Naive thymus-derived CD4-positive, alpha-beta T cell (primary cell): ENCODE measurements at regions of chr13 and their contacts with region 1.

Region 1: DNA sequence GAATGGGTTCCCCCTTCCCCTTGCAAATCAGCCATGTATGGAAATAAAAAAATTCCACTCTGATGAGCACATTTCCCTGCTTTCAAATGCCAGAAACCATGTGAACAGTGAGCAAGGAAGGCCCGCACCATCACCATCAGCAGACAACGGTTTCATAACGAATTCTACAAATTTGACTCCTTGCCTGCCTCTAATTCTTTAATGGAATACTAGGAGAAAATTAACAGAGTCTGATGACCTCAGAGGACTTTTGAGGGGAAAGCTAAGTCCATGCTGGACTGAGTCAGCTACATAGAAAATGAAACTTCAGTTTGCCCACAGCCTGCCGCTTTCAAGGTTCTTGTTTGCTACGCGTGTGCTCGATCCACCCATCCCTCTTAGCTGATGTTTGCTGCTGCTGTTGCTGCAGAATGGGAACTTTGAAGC is 46.7 kb upstream of the KL start:
- DNase-seq: no peak
- ATAC-seq: no peak
- H3K4me3 ChIP-seq: no peak overlapping the region
- H3K4me3 Mint-ChIP-seq: no peak overlapping the region
- H3K27ac ChIP-seq: no peak overlapping the region
- H3K27ac Mint-ChIP-seq: no peak overlapping the region
- H3K4me1 ChIP-seq: no peaks in the 10 kb centered on the region
- H3K4me1 Mint-ChIP-seq: peaks cover 0 to 7% (median 0%) of the 10 kb centered on the region in 7 donors
- H3K27me3 ChIP-seq: no peaks in the 10 kb centered on the region
- H3K27me3 Mint-ChIP-seq: peaks cover 0 to 7% (median 0%) of the 10 kb centered on the region in 5 donors

Region 2: DNA sequence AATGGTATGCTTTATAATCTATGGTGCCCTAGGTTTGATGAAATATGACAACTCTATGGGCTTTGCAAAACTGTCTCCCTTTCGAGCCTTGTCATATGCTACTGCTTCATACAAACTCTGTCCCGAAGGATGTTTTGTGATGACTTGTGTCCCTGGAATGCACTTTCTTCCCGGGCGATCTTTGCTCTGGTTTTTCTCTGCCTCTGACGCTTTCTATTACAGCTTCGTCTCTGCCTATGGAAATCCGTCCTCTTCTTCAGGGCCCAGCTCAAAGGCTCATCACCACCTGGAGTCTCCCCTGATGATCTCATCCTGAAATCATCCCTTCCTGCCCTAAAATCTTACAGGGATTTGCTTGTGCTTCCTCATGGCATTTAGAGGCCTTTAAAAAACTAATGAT is 144.9 kb before region 1 on chr13:
- CTCF ChIA-PET with region 1: no interaction called
- POLR2A ChIA-PET with region 1: no interaction called
- intact Hi-C with region 1: no loop called
- DNase-seq: no peak
- ATAC-seq: no peak
- H3K4me3 ChIP-seq: no peak overlapping the region
- H3K4me3 Mint-ChIP-seq: no peak overlapping the region
- H3K27ac ChIP-seq: no peak overlapping the region
- H3K27ac Mint-ChIP-seq: no peak overlapping the region
- H3K4me1 ChIP-seq: no peaks in the 10 kb centered on the region
- H3K4me1 Mint-ChIP-seq: peaks cover 0 to 6% (median 0%) of the 10 kb centered on the region in 7 donors
- H3K27me3 ChIP-seq: no peaks in the 10 kb centered on the region
- H3K27me3 Mint-ChIP-seq: peaks cover 0 to 2% (median 0%) of the 10 kb centered on the region in 5 donors

Region 3: DNA sequence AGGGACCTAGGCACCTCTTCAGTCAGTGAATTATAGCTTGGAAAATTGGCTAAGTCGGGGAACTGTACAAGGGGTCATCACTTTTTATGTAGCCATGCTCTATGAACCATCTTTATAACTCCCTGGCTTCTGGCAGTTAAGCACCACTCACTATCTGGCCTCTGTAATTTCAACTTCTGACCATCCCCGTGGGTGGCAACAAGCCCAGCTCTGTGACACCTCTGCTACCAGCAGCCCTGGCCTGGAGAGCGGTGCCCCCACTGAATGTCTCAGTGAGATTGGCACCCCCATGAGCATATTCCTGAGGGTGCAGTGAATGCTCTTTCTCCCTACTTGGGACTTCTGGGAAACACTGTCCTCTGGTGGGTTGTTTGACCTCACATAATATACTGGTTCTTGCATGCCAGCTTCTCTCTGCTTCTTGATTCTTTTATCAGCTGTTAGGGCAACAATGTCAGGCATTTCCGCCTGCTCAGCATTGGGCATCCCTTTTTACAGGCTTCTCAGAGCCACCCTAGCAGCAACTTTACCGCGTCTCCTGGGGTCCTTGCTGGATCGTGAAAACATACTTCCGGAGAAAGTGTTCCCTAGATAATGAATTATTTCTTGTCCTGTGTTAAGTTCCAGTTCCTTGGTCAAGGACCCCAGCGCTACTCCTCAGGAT is 57.1 kb after region 1 on chr13:
- CTCF ChIA-PET with region 1: no interaction called
- POLR2A ChIA-PET with region 1: no interaction called
- intact Hi-C with region 1: loop called in 1 of 2 experiments (anchors 10 kb)
- DNase-seq: no peak
- ATAC-seq: no peak
- H3K4me3 ChIP-seq: no peak overlapping the region
- H3K4me3 Mint-ChIP-seq: no peak overlapping the region
- H3K27ac ChIP-seq: no peak overlapping the region
- H3K27ac Mint-ChIP-seq: no peak overlapping the region
- H3K4me1 ChIP-seq: no peaks in the 10 kb centered on the region
- H3K4me1 Mint-ChIP-seq: no peaks in the 10 kb centered on the region
- H3K27me3 ChIP-seq: no peaks in the 10 kb centered on the region
- H3K27me3 Mint-ChIP-seq: peaks cover 22 to 42% (median 37%) of the 10 kb centered on the region in 5 donors

Region 4: GRCh38 chr13:33188093-33188882 is 218.8 kb after region 1 on chr13:
- CTCF ChIA-PET with region 1: no interaction called
- POLR2A ChIA-PET with region 1: no interaction called
- intact Hi-C with region 1: no loop called
- DNase-seq: no peak
- ATAC-seq: no peak
- H3K4me3 ChIP-seq: no peak overlapping the region
- H3K4me3 Mint-ChIP-seq: peak overlapping the region in 1 of 10 donors; percentile 18
- H3K27ac ChIP-seq: no peak overlapping the region
- H3K27ac Mint-ChIP-seq: peak overlapping the region in 1 of 9 donors; percentile 61
- H3K4me1 ChIP-seq: no peaks in the 10 kb centered on the region
- H3K4me1 Mint-ChIP-seq: peaks cover 3 to 37% (median 8%) of the 10 kb centered on the region in 7 donors
- H3K27me3 ChIP-seq: no peaks in the 10 kb centered on the region
- H3K27me3 Mint-ChIP-seq: peaks cover 0 to 18% (median 11%) of the 10 kb centered on the region in 5 donors

Region 5: DNA sequence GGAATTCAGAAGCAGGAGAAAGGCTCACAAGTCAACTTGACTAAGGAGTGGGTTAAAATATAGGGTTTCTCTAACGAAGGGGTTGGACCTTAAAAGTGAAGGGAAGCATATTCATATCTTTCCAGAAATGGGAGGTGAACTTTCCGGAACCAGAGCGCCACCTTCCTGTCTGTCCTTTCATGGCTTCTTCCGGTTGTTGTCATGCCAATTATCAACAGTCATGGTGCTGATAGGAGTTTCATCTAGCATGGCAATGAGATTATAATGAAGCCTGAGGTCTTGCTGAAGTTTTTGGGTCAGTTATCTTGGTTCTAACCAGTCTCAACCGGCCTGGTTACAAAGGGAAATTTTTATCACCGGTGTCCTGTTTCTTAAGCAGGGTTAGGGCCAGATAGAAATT is 1809.6 kb after region 1 on chr13:
- CTCF ChIA-PET with region 1: no interaction called
- POLR2A ChIA-PET with region 1: no interaction called
- intact Hi-C with region 1: no loop called
- DNase-seq: no peak
- ATAC-seq: no peak
- H3K4me3 ChIP-seq: no peak overlapping the region
- H3K4me3 Mint-ChIP-seq: no peak overlapping the region
- H3K27ac ChIP-seq: no peak overlapping the region
- H3K27ac Mint-ChIP-seq: no peak overlapping the region
- H3K4me1 ChIP-seq: no peaks in the 10 kb centered on the region
- H3K4me1 Mint-ChIP-seq: no peaks in the 10 kb centered on the region
- H3K27me3 ChIP-seq: no peaks in the 10 kb centered on the region
- H3K27me3 Mint-ChIP-seq: peaks cover 0 to 6% (median 5%) of the 10 kb centered on the region in 5 donors